ENCODE measurements at regions of chr16 and their contacts with region 1.

Region 1: GRCh38 chr16:24504472-24505345 is 34.7 kb upstream of the RBBP6 start:
- DNase-seq: peak; percentile 71
- CTCF ChIP-seq: peak; percentile 72

Region 2: GRCh38 chr16:23734176-23734893 is 770.4 kb before region 1 on chr16:
- CTCF ChIA-PET with region 1: interaction called, 13 read pairs
- POLR2A ChIA-PET with region 1: no interaction called
- DNase-seq: no peak
- CTCF ChIP-seq: no peak

Region 3: GRCh38 chr16:24041826-24042631 is 462.7 kb before region 1 on chr16:
- CTCF ChIA-PET with region 1: interaction called, 18 read pairs
- POLR2A ChIA-PET with region 1: no interaction called
- DNase-seq: peak; percentile 82
- CTCF ChIP-seq: peak; percentile 65

Region 4: DNA sequence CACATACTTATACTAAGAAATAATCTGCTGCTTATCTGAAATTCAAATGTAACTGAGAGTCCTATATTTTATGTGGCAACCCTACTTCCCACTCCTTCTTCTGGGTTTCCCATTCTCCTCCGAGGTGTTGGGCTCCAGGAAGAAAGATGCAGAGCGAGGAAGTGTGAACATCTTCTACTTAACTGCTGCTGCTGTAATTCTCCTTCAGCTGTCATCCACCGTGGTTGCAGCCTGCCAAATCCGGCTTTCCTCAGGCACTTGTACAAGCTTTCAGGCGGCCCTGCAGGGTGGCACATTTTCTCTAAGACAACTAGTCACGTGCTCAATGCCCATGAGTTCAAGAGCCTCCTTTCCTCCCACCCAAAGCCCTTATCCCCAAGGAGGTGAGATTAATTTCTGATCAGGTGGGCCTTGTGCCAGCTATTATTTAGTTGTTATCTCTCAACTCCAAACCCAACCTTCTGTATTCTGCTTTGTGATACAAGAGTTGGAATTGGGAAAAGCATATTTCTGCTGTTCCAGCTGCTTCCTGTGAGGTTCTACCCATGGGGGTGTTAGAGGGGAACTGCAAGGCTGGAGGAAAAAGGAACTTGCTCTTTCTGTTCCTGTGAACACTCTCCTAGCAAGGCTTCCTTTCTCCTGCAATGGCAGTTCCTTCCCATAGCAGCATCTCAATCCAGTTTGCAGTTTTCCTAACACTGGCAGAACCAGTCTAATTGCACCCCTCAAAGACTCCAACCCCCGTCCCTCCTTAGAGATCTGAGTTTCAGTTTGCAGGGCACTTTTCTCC is 33.0 kb before region 1 on chr16:
- CTCF ChIA-PET with region 1: interaction called, 11 read pairs
- POLR2A ChIA-PET with region 1: no interaction called
- DNase-seq: no peak
- CTCF ChIP-seq: no peak

Region 5: GRCh38 chr16:24516900-24517669 is 12.4 kb after region 1 on chr16:
- CTCF ChIA-PET with region 1: interaction called, 60 read pairs
- POLR2A ChIA-PET with region 1: no interaction called
- DNase-seq: peak; percentile 69
- CTCF ChIP-seq: peak; percentile 82

Region 6: DNA sequence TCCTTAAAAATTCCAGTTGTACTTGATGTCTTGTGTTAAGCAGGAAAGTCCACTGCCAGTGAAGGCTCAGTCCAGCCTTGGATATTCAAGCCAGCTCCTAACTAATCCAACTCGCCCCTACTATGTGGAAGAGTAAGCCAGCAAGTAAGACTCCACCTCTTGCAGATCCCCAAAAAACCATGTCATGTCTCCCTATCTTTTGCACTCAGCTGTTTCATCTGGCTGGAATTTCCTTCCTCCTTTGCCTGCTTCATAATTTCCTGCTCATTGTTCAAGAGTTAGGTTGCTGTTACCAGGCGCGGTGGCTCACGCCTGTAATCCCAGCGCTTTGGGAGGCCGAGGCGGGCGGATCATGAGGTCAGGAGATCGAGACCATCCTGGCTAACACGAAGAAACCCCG is 72.5 kb after region 1 on chr16:
- CTCF ChIA-PET with region 1: no interaction called
- POLR2A ChIA-PET with region 1: no interaction called
- DNase-seq: no peak
- CTCF ChIP-seq: no peak

Measured in GM10248 (cell line).